Left cardiac atrium (tissue), 4 donors: ENCODE measurements at regions of chr20 and their contacts with region 1.

Region 1: DNA sequence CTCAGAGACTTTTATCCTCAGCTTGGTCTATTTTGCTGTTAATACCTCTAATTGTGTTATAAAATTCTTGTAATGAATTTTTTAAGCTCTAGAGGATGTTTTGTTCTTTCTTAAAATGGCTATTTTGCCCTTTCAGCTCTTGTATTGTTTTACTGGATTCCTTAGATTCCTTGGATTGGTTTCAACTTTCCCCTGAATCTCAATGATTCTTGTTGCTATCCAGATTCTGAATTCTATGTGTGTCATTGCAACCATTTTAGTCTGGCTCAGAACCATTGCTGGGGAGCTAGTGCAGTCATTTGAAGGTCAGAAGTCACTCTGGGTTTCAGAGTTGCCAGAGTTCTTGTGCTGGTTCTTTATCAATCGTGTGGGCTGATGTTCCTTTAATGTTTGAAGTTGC is 37.1 kb downstream of the OTOR start:
- DNase-seq: no peak
- ATAC-seq: no peak

Region 2: DNA sequence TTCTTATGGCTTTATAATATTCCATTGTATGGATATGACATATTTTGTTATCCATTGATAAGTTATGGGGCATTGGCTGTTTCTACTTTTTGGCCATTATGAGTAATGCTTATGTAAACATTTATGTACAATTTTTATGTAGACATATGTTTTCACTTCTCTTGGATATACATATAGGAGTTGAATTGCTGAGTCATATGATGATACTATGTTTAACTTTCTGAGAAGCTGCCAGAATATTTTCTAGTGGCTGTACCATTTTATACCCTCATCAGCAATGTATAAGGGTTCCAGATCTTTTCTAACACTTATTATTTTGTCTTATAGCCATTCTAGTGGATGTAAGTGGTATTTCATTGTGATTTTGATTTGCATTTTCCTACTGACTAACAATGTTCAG is 14.0 kb before region 1 on chr20:
- intact Hi-C with region 1: loop called in 1 of 2 experiments (anchors 1 kb)
- DNase-seq: no peak
- ATAC-seq: no peak